ENCODE measurements at regions of chr1 and their contacts with region 1.

Region 1: GRCh38 chr1:91924146-91924545 is 25.1 kb upstream of the BRDT start:
- DNase-seq: peak; percentile 37
- H3K4me3 ChIP-seq: no peak overlapping the region
- H3K27ac ChIP-seq: no peak overlapping the region
- H3K4me1 ChIP-seq: peaks cover 2% of the 10 kb centered on the region
- H3K27me3 ChIP-seq: no peaks in the 10 kb centered on the region
- CTCF ChIP-seq: no peak
- POLR2A ChIP-seq: no peak

Region 2: GRCh38 chr1:91511386-91511785 is 412.8 kb before region 1 on chr1:
- CTCF ChIA-PET with region 1: interaction called, 119 read pairs
- POLR2A ChIA-PET with region 1: no interaction called
- dilution Hi-C with region 1: no loop called
- intact Hi-C with region 1: loop called (anchors 1 kb)
- DNase-seq: peak; percentile 57
- H3K4me3 ChIP-seq: no peak overlapping the region
- H3K27ac ChIP-seq: no peak overlapping the region
- H3K4me1 ChIP-seq: no peaks in the 10 kb centered on the region
- H3K27me3 ChIP-seq: no peaks in the 10 kb centered on the region
- CTCF ChIP-seq: peak; percentile 24 to 43
- POLR2A ChIP-seq: no peak

Region 3: GRCh38 chr1:91529856-91530255 is 394.3 kb before region 1 on chr1:
- CTCF ChIA-PET with region 1: interaction called, 16 read pairs
- POLR2A ChIA-PET with region 1: no interaction called
- dilution Hi-C with region 1: no loop called
- intact Hi-C with region 1: loop called (anchors 1 kb)
- DNase-seq: peak; percentile 43
- H3K4me3 ChIP-seq: no peak overlapping the region
- H3K27ac ChIP-seq: no peak overlapping the region
- H3K4me1 ChIP-seq: no peaks in the 10 kb centered on the region
- H3K27me3 ChIP-seq: no peaks in the 10 kb centered on the region
- CTCF ChIP-seq: peak in 1 of 2 donors; percentile 2
- POLR2A ChIP-seq: no peak

Region 4: GRCh38 chr1:91611498-91611917 is 312.6 kb before region 1 on chr1:
- CTCF ChIA-PET with region 1: no interaction called
- POLR2A ChIA-PET with region 1: no interaction called
- dilution Hi-C with region 1: no loop called
- intact Hi-C with region 1: no loop called
- DNase-seq: no peak
- H3K4me3 ChIP-seq: no peak overlapping the region
- H3K27ac ChIP-seq: no peak overlapping the region
- H3K4me1 ChIP-seq: no peaks in the 10 kb centered on the region
- H3K27me3 ChIP-seq: no peaks in the 10 kb centered on the region
- CTCF ChIP-seq: no peak
- POLR2A ChIP-seq: no peak

Region 5: DNA sequence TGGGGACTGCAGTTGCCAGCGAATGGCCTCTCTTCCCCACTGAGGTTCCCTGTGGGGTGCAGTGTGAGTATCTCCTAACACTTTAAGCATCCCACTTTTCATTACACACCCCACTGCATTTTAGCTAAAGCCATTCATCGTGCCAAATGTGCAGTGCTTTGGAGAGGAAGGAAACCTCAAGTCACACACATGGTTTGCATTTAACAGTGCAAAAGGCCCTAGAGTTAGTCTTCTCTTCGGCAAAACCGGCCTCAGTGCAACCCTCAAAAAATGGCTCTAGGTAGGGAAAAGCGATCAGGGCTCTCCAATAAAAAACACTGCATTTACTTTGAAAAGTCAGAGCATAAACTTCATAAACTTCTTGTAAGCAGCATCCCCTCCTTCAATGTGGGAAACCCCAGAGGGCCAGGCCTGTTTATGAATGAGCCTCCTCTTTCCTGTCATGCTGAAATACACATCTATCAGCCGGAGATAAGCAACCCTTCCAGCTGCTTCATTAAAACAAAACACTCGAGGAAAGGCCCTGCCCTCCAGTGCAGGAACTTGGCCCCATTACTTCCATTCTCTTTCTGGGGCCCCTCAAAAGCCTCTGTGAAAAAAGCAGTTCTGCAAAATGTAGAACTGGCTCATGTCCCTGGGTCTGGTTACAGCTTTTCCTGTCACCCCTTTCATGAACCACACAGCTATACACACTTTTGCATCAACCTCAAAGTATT is 239.5 kb before region 1 on chr1:
- CTCF ChIA-PET with region 1: no interaction called
- POLR2A ChIA-PET with region 1: no interaction called
- dilution Hi-C with region 1: no loop called
- intact Hi-C with region 1: loop called (anchors 1 kb)
- DNase-seq: peak; percentile 66
- H3K4me3 ChIP-seq: no peak overlapping the region
- H3K27ac ChIP-seq: no peak overlapping the region
- H3K4me1 ChIP-seq: peaks cover 33% of the 10 kb centered on the region
- H3K27me3 ChIP-seq: no peaks in the 10 kb centered on the region
- CTCF ChIP-seq: no peak
- POLR2A ChIP-seq: no peak

Region 6: DNA sequence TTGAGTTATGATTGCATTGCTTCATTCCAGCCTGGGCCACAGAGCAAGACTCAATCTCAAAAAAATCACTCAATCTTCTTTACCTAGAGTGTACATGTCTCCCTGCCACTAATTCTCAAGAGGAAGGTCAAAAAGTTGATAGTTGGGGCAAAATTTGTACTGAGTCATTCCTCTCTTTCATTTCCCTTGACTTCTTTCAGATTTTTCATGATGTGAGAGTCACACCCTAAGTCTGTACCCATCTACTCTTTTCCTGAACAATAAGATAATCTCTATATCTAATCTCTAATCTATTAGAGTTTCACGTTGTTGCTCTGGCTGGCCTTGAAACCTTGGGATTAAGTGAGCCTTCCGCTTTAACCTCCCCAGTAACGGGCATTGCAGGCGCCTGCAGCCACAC is 24.0 kb after region 1 on chr1:
- CTCF ChIA-PET with region 1: no interaction called
- POLR2A ChIA-PET with region 1: no interaction called
- dilution Hi-C with region 1: no loop called
- intact Hi-C with region 1: no loop called
- DNase-seq: no peak
- H3K4me3 ChIP-seq: no peak overlapping the region
- H3K27ac ChIP-seq: no peak overlapping the region
- H3K4me1 ChIP-seq: peaks cover 3% of the 10 kb centered on the region
- H3K27me3 ChIP-seq: no peaks in the 10 kb centered on the region
- CTCF ChIP-seq: no peak
- POLR2A ChIP-seq: no peak

Region 7: DNA sequence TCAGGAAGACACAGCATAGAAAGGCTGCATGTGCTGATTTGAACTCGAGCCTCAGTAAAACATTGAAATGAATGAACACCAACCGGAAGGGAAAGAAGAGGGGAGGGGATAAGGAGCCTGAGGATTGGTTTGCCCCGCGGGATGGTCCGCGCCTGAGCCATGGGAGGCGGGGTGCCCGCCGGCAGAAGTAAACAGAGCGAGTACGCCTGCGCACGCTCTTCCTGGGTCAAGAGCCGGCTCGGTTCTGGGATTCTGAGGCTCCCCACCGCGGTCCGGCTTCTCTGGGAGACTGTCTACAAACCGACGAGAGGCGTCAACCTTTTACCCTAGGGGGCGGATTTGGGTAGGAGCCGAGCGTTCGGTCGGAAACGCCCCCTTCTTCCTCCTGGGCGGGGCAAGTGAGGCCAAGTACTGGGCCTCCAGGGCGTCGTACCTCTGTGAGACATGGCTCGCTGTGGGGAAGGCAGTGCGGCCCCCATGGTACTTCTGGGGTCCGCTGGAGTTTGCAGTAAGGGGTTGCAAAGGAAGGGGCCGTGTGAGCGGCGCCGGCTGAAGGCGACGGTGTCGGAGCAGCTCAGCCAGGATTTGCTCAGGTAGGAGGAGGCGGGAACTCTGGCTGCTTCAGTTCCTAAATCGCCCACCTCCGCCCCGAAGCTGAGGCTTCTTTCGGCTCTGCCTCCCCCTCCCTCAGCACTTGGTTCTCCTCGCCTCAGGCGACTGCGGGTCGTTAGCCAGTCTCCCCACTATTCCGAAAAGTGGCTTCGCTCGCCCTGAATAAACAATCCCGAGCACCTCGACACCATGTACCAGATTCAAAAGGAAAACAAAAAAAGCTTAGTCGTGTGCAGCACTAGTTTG is 156.2 kb after region 1 on chr1 and contains the start of gene BTBD8:
- CTCF ChIA-PET with region 1: no interaction called
- POLR2A ChIA-PET with region 1: no interaction called
- dilution Hi-C with region 1: no loop called
- intact Hi-C with region 1: no loop called
- DNase-seq: peak; percentile 78
- H3K4me3 ChIP-seq: peak within 1 kb of the TSS; percentile 54 to 93 (median 70)
- H3K27ac ChIP-seq: peak within 1 kb of the TSS; percentile 10
- H3K4me1 ChIP-seq: peaks cover 2% of the 10 kb centered on the region
- H3K27me3 ChIP-seq: peaks cover 0 to 2% of the 10 kb centered on the region in 2 experiments
- CTCF ChIP-seq: no peak
- POLR2A ChIP-seq: no peak
- total RNA-seq, gene BTBD8: 1.5 and 1.7 TPM in 2 replicates

Measured in endothelial cell of umbilical vein (primary cell).